Ascending aorta (tissue), 2 donors: ENCODE measurements at regions of chr15 and their contacts with region 1.

Region 1: GRCh38 chr15:63752075-63752684 is 81.6 kb downstream of the HERC1 start:
- DNase-seq: no peak
- H3K4me3 ChIP-seq: no peak overlapping the region
- H3K27ac ChIP-seq: no peak overlapping the region
- H3K4me1 ChIP-seq: no peaks in the 10 kb centered on the region
- H3K27me3 ChIP-seq: no peaks in the 10 kb centered on the region
- CTCF ChIP-seq: peak; percentile 46 to 69 (median 68)

Region 2: GRCh38 chr15:63891079-63891767 is 139.0 kb after region 1 on chr15:
- intact Hi-C with region 1: loop called (anchors 2 kb)
- DNase-seq: peak; percentile 28 to 82
- H3K4me3 ChIP-seq: no peak overlapping the region
- H3K27ac ChIP-seq: no peak overlapping the region
- H3K4me1 ChIP-seq: no peaks in the 10 kb centered on the region
- H3K27me3 ChIP-seq: no peaks in the 10 kb centered on the region
- CTCF ChIP-seq: peak; percentile 47 to 70 (median 63)

Region 3: GRCh38 chr15:64841258-64842095 is 1089.3 kb after region 1 on chr15 and contains the start of gene PLEKHO2:
- intact Hi-C with region 1: no loop called
- DNase-seq: peak; percentile 87 to 98
- H3K4me3 ChIP-seq: peak within 1 kb of the TSS; percentile 88 to 92
- H3K27ac ChIP-seq: peak within 1 kb of the TSS; percentile 92 to 98
- H3K4me1 ChIP-seq: peaks cover 18 to 34% of the 10 kb centered on the region in 2 donors
- H3K27me3 ChIP-seq: no peaks in the 10 kb centered on the region
- CTCF ChIP-seq: peak in 1 of 3 experiments; percentile 13
- total RNA-seq, gene PLEKHO2: 41.4 TPM